Heart left ventricle (tissue), 16 donors: ENCODE measurements at regions of chr1 and their contacts with region 1.

Region 1: DNA sequence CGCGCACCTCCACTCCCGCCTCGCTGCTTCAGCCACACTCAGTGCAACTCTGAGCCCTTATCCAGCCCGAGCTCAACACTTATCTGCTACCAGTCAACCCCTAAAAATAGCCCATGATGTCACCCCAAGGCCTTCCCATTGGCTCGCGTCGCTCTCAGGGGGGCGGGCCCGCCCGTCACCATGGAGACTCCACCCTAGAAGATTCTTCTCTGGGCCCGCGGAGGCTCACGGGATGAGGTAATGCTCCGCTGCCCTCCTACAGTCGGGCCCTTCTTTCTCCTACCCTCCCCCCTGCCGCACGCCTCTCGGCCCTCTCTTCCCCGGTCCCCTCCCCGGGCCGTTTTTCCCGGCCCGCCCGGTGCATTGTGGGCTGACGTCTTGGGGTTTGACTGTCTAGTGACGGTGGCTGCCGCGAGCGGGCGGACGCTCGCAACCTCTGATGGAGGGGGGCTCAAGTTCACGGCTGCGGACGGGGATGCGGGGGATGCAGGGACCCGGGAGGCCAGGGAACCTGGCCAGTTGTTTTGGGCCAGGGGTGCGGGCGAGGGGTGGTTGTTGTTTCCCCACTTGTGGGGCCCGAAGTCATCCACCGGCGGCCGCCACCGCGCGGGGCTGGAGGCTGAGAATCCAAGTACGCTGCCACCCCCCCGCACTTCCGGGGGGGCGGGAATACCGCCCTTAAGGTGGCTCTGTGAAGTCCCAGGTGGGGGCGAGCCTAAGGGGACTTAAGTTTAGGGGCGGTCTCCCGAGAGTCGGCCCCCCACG is at the start of gene JUN:
- DNase-seq: peak; percentile 99 to 100 (median 100)
- ATAC-seq: peak; percentile 87 to 95 (median 92)
- H3K4me3 ChIP-seq: peak within 1 kb of the TSS; percentile 59 to 99 (median 92)
- H3K27ac ChIP-seq: peak within 1 kb of the TSS; percentile 95 to 100 (median 99)
- H3K4me1 ChIP-seq: peaks cover 0 to 34% (median 19%) of the 10 kb centered on the region in 12 donors
- H3K27me3 ChIP-seq: no peaks in the 10 kb centered on the region
- CTCF ChIP-seq: peak in 5 of 12 donors; percentile 8 to 45 (median 31)
- POLR2A ChIP-seq: peak; percentile 37 to 100
- total RNA-seq, gene JUN: 57.1 to 128 (median 82.8) TPM

Region 2: GRCh38 chr1:58683519-58683918 is 100.7 kb before region 1 on chr1:
- intact Hi-C with region 1: no loop called
- DNase-seq: no peak
- ATAC-seq: no peak
- H3K4me3 ChIP-seq: no peak overlapping the region
- H3K27ac ChIP-seq: peak overlapping the region in 3 of 12 donors; percentile 12 to 35 (median 17)
- H3K4me1 ChIP-seq: peaks cover 0 to 37% (median 23%) of the 10 kb centered on the region in 12 donors
- H3K27me3 ChIP-seq: no peaks in the 10 kb centered on the region
- CTCF ChIP-seq: no peak
- POLR2A ChIP-seq: no peak

Region 3: GRCh38 chr1:58798910-58799442 is 14.8 kb after region 1 on chr1:
- intact Hi-C with region 1: no loop called
- DNase-seq: no peak
- ATAC-seq: no peak
- H3K4me3 ChIP-seq: no peak overlapping the region
- H3K27ac ChIP-seq: no peak overlapping the region
- H3K4me1 ChIP-seq: peaks cover 0 to 2% (median 0%) of the 10 kb centered on the region in 12 donors
- H3K27me3 ChIP-seq: no peaks in the 10 kb centered on the region
- CTCF ChIP-seq: no peak
- POLR2A ChIP-seq: no peak

Region 4: DNA sequence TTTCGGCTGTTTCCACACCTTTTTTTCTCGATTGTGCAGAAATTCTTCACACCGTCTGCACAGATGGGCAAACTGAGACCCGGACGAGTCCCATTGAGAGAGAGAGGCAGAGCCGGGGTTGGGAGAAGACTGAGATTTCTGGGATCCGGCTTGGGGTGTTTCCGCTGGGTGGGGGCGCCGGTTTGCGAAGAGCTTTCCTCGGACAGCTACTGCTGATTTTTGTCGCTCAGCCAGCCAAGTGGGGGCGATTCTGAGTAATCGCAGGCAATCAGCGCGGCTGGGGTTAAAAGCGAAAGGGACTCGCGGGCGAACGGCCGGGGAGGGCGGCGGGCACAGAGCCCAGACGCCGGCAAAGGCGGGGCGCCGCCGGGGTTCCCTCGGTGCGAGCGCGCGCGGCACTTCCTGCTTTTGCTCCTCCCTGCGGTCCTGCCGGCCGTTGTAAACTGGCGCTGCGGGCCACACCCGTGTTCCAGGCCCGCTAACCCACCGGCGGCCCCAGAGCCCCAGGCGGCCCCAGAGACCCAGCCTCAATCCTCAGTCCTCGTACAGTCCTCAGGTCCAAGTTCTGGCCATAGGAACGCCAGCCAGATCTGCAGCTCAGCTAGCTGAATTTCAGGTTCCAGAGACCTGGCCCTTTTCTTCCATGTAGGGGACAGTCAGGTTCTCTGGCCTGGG is 32.0 kb after region 1 on chr1:
- intact Hi-C with region 1: loop called in 7 of 10 experiments (anchors 1 to 2 kb)
- DNase-seq: peak; percentile 92 to 96 (median 94)
- ATAC-seq: peak; percentile 80 to 93 (median 90)
- H3K4me3 ChIP-seq: peak overlapping the region; percentile 32 to 71 (median 64)
- H3K27ac ChIP-seq: peak overlapping the region; percentile 87 to 96 (median 92)
- H3K4me1 ChIP-seq: peaks cover 0 to 59% (median 20%) of the 10 kb centered on the region in 12 donors
- H3K27me3 ChIP-seq: no peaks in the 10 kb centered on the region
- CTCF ChIP-seq: peak in 3 of 12 donors; percentile 19 to 30 (median 26)
- POLR2A ChIP-seq: peak in 1 of 2 donors; percentile 55

Region 5: DNA sequence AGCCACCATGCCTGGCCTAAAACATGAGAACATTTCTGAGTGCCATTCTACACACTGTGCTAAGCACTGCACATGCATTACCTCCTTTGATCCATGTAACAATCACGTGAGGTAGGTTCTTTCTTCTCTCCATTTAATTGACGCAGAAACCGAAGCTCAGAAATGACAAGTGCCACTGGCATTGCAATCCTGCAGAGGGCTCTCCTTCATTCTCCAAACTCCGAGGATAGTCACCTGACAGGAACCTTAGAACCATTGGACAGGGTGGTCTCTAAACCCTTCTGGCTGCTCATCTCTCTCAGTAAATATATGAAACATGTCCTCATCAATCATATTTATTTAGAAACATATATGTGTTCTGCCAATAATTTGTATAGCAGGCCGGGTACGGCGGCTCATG is 166.7 kb after region 1 on chr1:
- intact Hi-C with region 1: no loop called
- DNase-seq: no peak
- ATAC-seq: no peak
- H3K4me3 ChIP-seq: no peak overlapping the region
- H3K27ac ChIP-seq: no peak overlapping the region
- H3K4me1 ChIP-seq: no peaks in the 10 kb centered on the region
- H3K27me3 ChIP-seq: no peaks in the 10 kb centered on the region
- CTCF ChIP-seq: peak in 1 of 12 donors; percentile 11
- POLR2A ChIP-seq: no peak

Region 6: DNA sequence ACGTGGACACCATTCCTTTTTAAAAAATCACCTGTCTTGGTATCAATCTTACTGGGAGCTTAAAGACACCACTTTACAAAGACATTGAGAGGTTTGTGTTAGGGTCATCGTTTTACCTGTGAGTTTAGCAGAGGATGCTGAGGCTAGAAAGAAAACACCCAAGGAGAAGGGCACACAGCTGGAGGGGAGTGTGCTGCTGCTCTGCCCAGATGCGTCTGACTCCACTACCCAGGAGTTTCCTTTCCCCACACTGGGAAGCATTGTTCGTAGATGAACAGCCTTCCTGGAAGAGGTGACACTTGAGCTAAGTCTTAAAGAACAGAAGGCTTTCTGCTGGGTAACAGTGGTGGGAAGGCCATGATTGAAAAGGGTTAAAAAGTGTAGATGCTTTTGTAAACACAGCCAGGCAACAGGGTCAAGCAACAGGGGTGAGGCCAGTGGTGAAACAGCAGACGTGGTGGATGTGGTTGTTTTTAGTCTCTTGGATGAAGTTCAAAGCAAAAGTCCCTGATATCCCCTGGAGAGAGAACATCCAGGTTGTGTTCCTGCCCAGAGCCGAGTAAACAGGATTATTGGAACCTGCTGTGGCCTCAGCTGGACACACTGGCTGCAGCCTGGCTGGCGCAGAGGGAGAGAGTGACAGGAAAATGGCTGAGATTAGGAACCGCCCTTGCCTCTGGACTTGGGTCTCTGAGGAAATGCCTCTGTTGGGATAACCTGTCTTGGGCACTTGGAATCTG is 198.3 kb after region 1 on chr1:
- intact Hi-C with region 1: loop called in 2 of 10 experiments (anchors 5 to 10 kb)
- DNase-seq: peak in 4 of 5 donors; percentile 38 to 63 (median 46)
- ATAC-seq: peak; percentile 84 to 96 (median 92)
- H3K4me3 ChIP-seq: no peak overlapping the region
- H3K27ac ChIP-seq: peak overlapping the region; percentile 8 to 69 (median 54)
- H3K4me1 ChIP-seq: peaks cover 0 to 42% (median 19%) of the 10 kb centered on the region in 12 donors
- H3K27me3 ChIP-seq: no peaks in the 10 kb centered on the region
- CTCF ChIP-seq: no peak
- POLR2A ChIP-seq: no peak

Region 7: DNA sequence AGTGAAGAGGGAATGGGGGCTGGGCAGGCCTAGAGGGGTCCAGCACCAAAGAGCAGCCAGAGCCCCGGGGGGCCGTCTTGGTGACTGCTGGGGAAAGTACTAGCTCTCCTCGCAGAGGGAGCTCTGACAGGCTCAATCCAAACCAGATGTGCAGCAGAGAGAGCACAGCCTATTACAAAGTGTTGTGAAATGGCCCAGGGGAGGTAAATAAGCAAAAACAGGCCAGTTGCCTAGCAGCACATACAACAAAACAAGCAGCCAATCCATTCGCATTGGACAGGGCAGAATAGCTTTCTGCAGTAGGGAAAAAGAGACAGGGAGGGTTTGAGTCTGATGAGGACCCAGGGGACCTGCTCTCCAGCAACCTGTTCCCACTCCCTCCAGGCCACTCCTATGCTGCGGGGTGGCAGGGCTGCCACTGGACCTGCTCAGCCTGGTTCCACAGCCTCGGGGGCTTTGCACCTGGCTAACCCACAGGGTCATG is 273.1 kb after region 1 on chr1:
- intact Hi-C with region 1: loop called in 4 of 10 experiments (anchors 1 to 10 kb)
- DNase-seq: peak; percentile 81 to 91 (median 84)
- ATAC-seq: peak; percentile 89 to 93 (median 91)
- H3K4me3 ChIP-seq: no peak overlapping the region
- H3K27ac ChIP-seq: peak overlapping the region; percentile 35 to 77 (median 58)
- H3K4me1 ChIP-seq: peaks cover 0 to 42% (median 26%) of the 10 kb centered on the region in 12 donors
- H3K27me3 ChIP-seq: no peaks in the 10 kb centered on the region
- CTCF ChIP-seq: peak in 3 of 12 donors; percentile 12 to 37 (median 22)
- POLR2A ChIP-seq: peak in 1 of 2 donors; percentile 57

Region 8: DNA sequence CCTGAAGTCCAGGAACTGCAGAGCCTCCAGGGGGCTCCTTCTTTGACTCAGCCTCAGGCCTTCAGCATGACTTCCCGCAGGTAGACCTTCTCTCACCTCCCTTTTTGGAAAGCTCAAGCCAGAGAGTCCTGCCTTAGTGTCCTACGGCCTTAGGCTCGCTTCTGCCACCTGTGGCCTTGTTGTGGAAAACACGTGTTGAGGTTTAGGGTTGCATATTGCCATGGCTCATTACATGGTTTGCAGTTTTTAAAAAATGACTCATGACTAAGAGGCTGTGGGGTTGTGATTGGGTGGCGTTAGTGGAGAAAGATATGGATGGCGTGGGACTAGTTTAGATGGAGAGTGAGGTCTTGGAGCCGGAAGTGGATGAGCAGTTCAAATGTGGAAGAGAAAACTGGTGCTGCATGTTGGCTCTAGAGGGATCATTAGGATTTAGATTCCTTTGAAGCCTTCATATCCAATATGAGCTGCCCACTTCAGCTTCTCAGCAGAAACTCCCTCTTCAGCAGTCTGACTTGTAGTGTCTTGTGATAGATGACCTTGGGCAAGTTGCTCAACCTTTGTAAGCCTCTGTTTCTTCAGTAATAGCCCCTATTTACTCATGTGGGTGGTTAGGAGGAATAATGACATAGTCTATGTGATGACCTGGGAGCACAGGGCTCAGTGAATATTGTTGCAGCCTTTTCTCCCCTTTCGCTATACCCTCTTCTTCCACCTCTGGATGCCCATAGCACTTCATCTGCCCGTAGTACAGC is 506.2 kb after region 1 on chr1:
- intact Hi-C with region 1: loop called in 5 of 10 experiments (anchors 5 to 10 kb)
- DNase-seq: peak in 2 of 5 donors; percentile 27 to 43
- ATAC-seq: peak; percentile 18 to 60 (median 58)
- H3K4me3 ChIP-seq: no peak overlapping the region
- H3K27ac ChIP-seq: peak overlapping the region in 1 of 12 donors; percentile 83
- H3K4me1 ChIP-seq: peaks cover 0 to 41% (median 1%) of the 10 kb centered on the region in 12 donors
- H3K27me3 ChIP-seq: no peaks in the 10 kb centered on the region
- CTCF ChIP-seq: peak in 11 of 12 donors; percentile 17 to 55 (median 27)
- POLR2A ChIP-seq: no peak

Region 9: DNA sequence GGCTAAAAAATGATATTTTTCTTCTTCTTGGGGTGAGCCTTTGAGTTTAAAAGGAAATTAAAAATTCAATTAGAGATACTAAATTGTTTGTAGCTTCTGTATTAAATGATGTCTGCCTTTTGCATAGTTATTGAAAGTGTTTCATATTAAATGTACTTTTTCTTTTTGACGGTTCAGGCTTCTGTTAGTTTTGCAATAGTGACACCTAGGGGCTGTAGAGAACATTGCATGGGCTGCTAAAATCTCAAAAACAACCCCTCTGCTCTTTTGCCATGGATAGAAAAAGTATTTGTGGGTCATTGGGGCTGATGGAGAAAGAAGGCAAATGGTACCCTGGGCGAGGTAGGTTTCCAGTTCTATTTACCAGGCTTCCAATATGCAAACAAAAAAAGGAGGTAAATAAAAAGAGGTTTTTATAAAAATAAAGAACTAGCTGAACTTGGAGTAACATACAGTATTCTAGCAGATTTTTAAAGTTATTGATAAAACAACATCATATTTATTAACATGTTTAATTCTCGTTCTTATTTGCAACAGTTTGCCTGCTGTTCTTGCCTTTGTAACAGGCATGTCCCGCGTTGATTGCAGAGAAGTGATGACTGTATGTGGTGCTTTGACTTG is 915.2 kb after region 1 on chr1:
- intact Hi-C with region 1: loop called in 8 of 10 experiments (anchors 2 to 10 kb)
- DNase-seq: no peak
- ATAC-seq: peak in 1 of 4 donors; percentile 41
- H3K4me3 ChIP-seq: no peak overlapping the region
- H3K27ac ChIP-seq: peak overlapping the region in 2 of 12 donors; percentile 19 to 23
- H3K4me1 ChIP-seq: peaks cover 0 to 54% (median 17%) of the 10 kb centered on the region in 12 donors
- H3K27me3 ChIP-seq: no peaks in the 10 kb centered on the region
- CTCF ChIP-seq: peak; percentile 86 to 97 (median 94)
- POLR2A ChIP-seq: no peak